CD8-positive, alpha-beta T cell (primary cell): ENCODE measurements at regions of chr22 and their contacts with region 1.

Region 1: DNA sequence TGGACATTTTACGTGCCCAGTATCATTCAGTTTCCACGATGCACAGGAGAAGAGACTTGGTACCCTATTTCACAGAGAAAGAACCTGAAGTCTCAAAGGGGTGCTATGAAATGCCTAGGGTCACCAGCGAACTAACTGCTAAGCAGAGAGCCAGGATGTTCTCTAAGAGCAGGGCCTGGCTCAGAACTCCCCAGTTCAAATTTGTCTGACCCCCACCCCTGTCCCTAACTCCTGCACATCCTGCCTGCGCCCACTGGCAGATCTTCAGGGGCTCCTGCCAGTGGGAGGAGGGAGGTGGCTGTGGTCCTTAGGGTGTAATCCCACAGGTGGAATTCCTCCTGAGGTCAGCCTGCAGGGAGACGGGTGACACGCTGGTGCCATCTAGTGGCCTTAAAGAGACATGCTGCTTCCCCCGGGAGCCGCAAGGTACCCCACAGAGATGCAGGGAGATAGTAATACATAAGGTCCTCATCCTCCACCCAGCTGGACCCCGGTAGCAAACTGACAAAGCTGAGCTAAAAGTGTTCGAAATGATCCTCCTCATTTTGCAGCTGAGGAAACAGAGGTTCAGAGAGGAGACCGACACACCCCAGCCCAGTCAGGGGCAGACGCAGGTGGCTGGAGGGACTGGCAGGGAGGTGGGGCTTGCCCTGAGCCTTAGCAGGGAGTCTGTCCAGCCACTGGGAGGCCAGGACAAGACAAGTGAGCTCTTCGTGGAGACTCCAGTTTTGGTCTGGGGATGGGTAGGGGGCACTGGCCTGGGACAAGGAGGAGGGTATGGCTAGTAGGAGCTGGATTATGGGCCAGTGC is 34.1 kb downstream of the MB start:
- DNase-seq: peak; percentile 18 to 76 (median 53)
- ATAC-seq: peak; percentile 70
- H3K4me3 ChIP-seq: no peak overlapping the region
- H3K4me3 Mint-ChIP-seq: no peak overlapping the region
- H3K27ac ChIP-seq: no peak overlapping the region
- H3K27ac Mint-ChIP-seq: no peak overlapping the region
- H3K4me1 ChIP-seq: no peaks in the 10 kb centered on the region
- H3K4me1 Mint-ChIP-seq: no peaks in the 10 kb centered on the region
- H3K27me3 ChIP-seq: no peaks in the 10 kb centered on the region
- H3K27me3 Mint-ChIP-seq: no peaks in the 10 kb centered on the region
- CTCF ChIP-seq: peak; percentile 92

Region 2: GRCh38 chr22:35350539-35351503 is 232.2 kb before region 1 on chr22:
- CTCF ChIA-PET with region 1: interaction called, 64 read pairs
- POLR2A ChIA-PET with region 1: no interaction called
- intact Hi-C with region 1: loop called in 1 of 2 experiments (anchors 1 kb)
- DNase-seq: peak; percentile 67 to 92 (median 83)
- ATAC-seq: peak; percentile 85
- H3K4me3 ChIP-seq: peak overlapping the region; percentile 36 to 46
- H3K4me3 Mint-ChIP-seq: peak overlapping the region; percentile 79
- H3K27ac ChIP-seq: no peak overlapping the region
- H3K27ac Mint-ChIP-seq: no peak overlapping the region
- H3K4me1 ChIP-seq: peaks cover 14% of the 10 kb centered on the region
- H3K4me1 Mint-ChIP-seq: peaks cover 20% of the 10 kb centered on the region
- H3K27me3 ChIP-seq: peaks cover 0 to 5% of the 10 kb centered on the region in 2 experiments
- H3K27me3 Mint-ChIP-seq: peaks cover 11% of the 10 kb centered on the region
- CTCF ChIP-seq: peak; percentile 85

Region 3: DNA sequence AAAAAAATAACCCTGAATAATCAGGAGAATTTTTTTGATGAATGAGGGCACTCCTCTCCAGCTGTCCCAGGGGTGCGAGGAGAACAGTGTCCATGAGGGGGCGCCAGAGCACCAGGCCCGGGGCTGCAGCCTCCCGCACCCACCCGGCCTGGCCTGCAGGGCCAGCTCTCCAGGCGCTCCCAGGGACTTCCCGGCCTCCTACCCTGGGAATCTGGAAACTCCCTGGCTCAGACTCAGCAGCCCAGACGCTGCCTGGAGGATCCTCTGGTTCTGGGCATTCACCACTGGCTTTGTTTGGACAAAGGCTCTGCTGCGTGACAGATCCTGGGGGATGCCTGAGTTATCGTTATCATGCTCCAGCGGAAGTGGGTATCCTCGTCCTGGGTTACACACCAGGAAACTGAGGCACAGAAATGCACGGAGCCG is 152.2 kb before region 1 on chr22:
- CTCF ChIA-PET with region 1: interaction called, 51 read pairs
- POLR2A ChIA-PET with region 1: no interaction called
- intact Hi-C with region 1: loop called in 1 of 2 experiments (anchors 1 kb)
- DNase-seq: peak; percentile 49 to 76 (median 66)
- ATAC-seq: peak; percentile 84
- H3K4me3 ChIP-seq: no peak overlapping the region
- H3K4me3 Mint-ChIP-seq: no peak overlapping the region
- H3K27ac ChIP-seq: no peak overlapping the region
- H3K27ac Mint-ChIP-seq: no peak overlapping the region
- H3K4me1 ChIP-seq: no peaks in the 10 kb centered on the region
- H3K4me1 Mint-ChIP-seq: peaks cover 2% of the 10 kb centered on the region
- H3K27me3 ChIP-seq: no peaks in the 10 kb centered on the region
- H3K27me3 Mint-ChIP-seq: no peaks in the 10 kb centered on the region
- CTCF ChIP-seq: peak; percentile 83

Region 4: GRCh38 chr22:35866651-35867050 is 283.6 kb after region 1 on chr22:
- CTCF ChIA-PET with region 1: no interaction called
- POLR2A ChIA-PET with region 1: no interaction called
- intact Hi-C with region 1: no loop called
- DNase-seq: no peak
- ATAC-seq: no peak
- H3K4me3 ChIP-seq: no peak overlapping the region
- H3K4me3 Mint-ChIP-seq: no peak overlapping the region
- H3K27ac ChIP-seq: no peak overlapping the region
- H3K27ac Mint-ChIP-seq: no peak overlapping the region
- H3K4me1 ChIP-seq: no peaks in the 10 kb centered on the region
- H3K4me1 Mint-ChIP-seq: no peaks in the 10 kb centered on the region
- H3K27me3 ChIP-seq: no peaks in the 10 kb centered on the region
- H3K27me3 Mint-ChIP-seq: peaks cover 4% of the 10 kb centered on the region
- CTCF ChIP-seq: no peak

Region 5: DNA sequence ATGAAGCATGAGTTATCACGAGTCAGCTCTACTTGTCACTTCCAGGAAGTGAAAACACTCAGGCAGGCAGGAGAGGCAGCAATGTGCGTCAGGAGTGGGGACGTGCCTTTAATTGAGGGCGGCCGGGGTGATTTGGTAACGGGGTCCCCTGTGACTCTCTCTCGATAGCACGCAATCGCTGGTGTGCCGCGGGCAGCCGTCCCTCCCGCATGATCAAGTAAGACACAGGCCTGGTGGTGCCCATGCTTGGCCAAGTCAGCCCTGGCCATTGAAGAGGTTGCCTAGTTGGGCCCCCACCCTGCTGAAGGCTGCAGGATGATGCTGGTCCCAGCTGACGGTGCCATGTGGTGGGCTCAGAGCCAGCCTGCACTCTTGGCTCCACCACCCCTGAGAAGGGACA is 1090.8 kb after region 1 on chr22:
- CTCF ChIA-PET with region 1: no interaction called
- POLR2A ChIA-PET with region 1: no interaction called
- intact Hi-C with region 1: no loop called
- DNase-seq: no peak
- ATAC-seq: no peak
- H3K4me3 ChIP-seq: no peak overlapping the region
- H3K4me3 Mint-ChIP-seq: no peak overlapping the region
- H3K27ac ChIP-seq: no peak overlapping the region
- H3K27ac Mint-ChIP-seq: no peak overlapping the region
- H3K4me1 ChIP-seq: no peaks in the 10 kb centered on the region
- H3K4me1 Mint-ChIP-seq: peaks cover 2% of the 10 kb centered on the region
- H3K27me3 ChIP-seq: peaks cover 0 to 2% of the 10 kb centered on the region in 2 experiments
- H3K27me3 Mint-ChIP-seq: peaks cover 22% of the 10 kb centered on the region
- CTCF ChIP-seq: no peak